Posterior cingulate gyrus (tissue), 11 donors: ENCODE measurements at regions of chr1 and their contacts with region 1.

Region 1: GRCh38 chr1:22052115-22053016 is at the start of gene CDC42:
- DNase-seq: peak; percentile 96 to 100 (median 97)

Region 2: GRCh38 chr1:22025368-22026155 is 26.8 kb before region 1 on chr1:
- intact Hi-C with region 1: loop called (anchors 1 kb)
- DNase-seq: peak; percentile 68 to 98 (median 87)

Region 3: DNA sequence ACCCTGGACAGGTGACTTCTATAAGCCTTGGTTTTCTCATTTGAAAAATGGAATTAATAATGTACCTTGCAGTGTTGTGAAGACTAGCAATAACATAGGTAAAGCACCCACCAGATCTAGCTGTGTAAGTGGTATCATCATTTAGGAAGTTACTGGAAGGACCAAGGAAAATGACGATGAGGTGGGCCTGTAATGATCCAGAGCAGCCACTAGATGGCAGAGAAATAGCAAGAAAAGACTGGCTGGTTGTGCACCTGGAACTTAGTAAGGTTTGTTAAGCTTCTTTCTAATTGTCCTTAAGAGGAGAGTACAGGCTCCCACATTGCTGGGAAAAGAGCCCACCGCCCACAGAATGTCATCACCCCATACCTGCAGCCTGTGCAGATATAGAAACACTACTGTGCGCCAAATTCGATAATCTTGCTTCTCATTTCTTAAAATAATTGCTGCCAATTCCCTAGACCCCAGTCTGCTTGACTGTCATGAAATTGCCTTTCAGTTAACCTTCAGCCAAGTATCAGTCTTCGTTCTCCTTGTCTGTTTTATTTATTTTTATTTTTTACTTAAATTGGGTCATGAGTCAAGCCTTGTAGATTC is 53.3 kb after region 1 on chr1:
- intact Hi-C with region 1: no loop called
- DNase-seq: no peak